ENCODE measurements at regions of chr18 and their contacts with region 1.

Region 1: GRCh38 chr18:49788327-49788908 is 24.9 kb downstream of the ACAA2 start:
- DNase-seq: no peak
- ATAC-seq: no peak
- H3K4me3 ChIP-seq: 0 out of 4 replicates have a peak overlapping the region, but pooled peaks of 1 of the 2 experiments have one; percentile 13
- H3K27ac ChIP-seq: no peak overlapping the region
- H3K4me1 ChIP-seq: peaks cover 0 to 14% of the 10 kb centered on the region in 2 experiments; a peak in 3 of 4 replicates
- H3K27me3 ChIP-seq: no peaks in the 10 kb centered on the region
- CTCF ChIP-seq: no peak
- POLR2A ChIP-seq: no peak
- RAD21 ChIP-seq: no peak

Region 2: GRCh38 chr18:49802623-49803022 is 14.2 kb after region 1 on chr18:
- CTCF ChIA-PET with region 1: no interaction called
- POLR2A ChIA-PET with region 1: no interaction called
- RAD21 ChIA-PET with region 1: no interaction called
- intact Hi-C with region 1: loop called (anchors 1 kb)
- DNase-seq: no peak
- ATAC-seq: no peak
- H3K4me3 ChIP-seq: no peak overlapping the region
- H3K27ac ChIP-seq: no peak overlapping the region
- H3K4me1 ChIP-seq: peaks cover 0 to 4% of the 10 kb centered on the region in 2 experiments; a peak in 1 of 4 replicates
- H3K27me3 ChIP-seq: no peaks in the 10 kb centered on the region
- CTCF ChIP-seq: no peak
- POLR2A ChIP-seq: no peak
- RAD21 ChIP-seq: no peak

Measured in HCT116 (cell line).